ENCODE measurements at regions of chr6 and their contacts with region 1.

Region 1: DNA sequence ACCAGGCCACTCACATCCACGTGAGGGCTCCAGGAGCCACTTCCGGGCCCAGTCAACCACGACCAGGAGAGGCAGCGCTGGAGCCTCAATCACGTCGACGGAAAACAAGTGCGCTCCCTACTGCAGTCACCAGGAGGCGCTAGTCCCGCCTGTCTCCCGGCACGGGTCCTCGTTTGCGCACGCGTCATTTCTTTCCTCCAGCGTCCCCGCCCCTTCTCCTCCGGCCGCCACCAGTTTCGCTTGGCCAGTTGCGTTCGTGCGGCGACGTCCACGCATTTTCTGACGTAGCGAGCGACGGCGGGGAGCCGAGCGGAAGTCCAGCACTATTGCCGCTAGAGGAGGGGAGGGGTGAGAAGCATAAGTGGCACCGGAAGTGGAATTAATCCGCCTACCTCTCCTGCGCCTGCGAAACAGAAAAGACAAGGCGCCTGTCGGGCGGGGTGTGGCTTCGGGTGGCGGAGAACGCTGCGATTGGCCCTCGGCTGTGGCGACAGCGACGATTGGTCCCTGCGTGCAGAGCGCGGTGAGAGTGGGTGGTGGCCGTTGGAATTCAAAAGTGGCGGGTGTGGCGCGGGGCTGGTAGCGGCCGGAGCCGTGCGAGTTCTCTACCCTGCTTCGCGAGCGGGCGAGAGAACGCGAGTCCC is at the start of gene KIFC1:
- DNase-seq: peak; percentile 99 to 100
- ATAC-seq: peak; percentile 87 to 96 (median 88)
- H3K4me3 ChIP-seq: peak within 1 kb of the TSS; percentile 67
- H3K4me3 Mint-ChIP-seq: peak within 1 kb of the TSS; percentile 92
- H3K27ac ChIP-seq: peak within 1 kb of the TSS; percentile 85
- H3K27ac Mint-ChIP-seq: peak within 1 kb of the TSS; percentile 93
- H3K4me1 ChIP-seq: peaks cover 18% of the 10 kb centered on the region
- H3K4me1 Mint-ChIP-seq: peaks cover 25 to 29% of the 10 kb centered on the region in 2 donors
- H3K27me3 ChIP-seq: no peaks in the 10 kb centered on the region
- H3K27me3 Mint-ChIP-seq: no peaks in the 10 kb centered on the region
- CTCF ChIP-seq: peak; percentile 96
- total RNA-seq, gene KIFC1: 2.7 to 4.6 (median 3.3) TPM

Region 2: GRCh38 chr6:33144373-33144772 is 247.0 kb before region 1 on chr6:
- intact Hi-C with region 1: no loop called
- DNase-seq: no peak
- ATAC-seq: no peak
- H3K4me3 ChIP-seq: no peak overlapping the region
- H3K4me3 Mint-ChIP-seq: no peak overlapping the region
- H3K27ac ChIP-seq: no peak overlapping the region
- H3K27ac Mint-ChIP-seq: no peak overlapping the region
- H3K4me1 ChIP-seq: peaks cover 8% of the 10 kb centered on the region
- H3K4me1 Mint-ChIP-seq: peaks cover 18 to 24% of the 10 kb centered on the region in 2 donors
- H3K27me3 ChIP-seq: no peaks in the 10 kb centered on the region
- H3K27me3 Mint-ChIP-seq: peaks cover 17 to 18% of the 10 kb centered on the region in 2 donors
- CTCF ChIP-seq: no peak

Region 3: DNA sequence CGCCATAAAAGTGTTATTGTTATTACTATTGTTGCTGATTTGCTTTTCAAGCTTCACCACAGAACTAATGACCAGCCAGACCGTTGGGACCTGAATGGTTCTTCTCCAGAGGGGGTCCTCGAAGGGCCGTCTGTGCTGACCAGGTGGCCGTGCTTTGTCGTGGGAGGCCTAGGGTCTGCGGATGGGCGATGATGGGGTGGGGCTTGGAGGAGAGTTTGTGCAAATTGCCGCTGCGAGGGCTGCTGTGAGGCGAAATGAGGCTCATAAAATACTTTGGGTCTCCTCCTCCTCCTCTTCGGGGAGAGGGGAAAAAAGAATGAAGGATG is 67.8 kb before region 1 on chr6:
- intact Hi-C with region 1: loop called (anchors 1 kb)
- DNase-seq: no peak
- ATAC-seq: no peak
- H3K4me3 ChIP-seq: peak overlapping the region; percentile 67
- H3K4me3 Mint-ChIP-seq: peak overlapping the region; percentile 99
- H3K27ac ChIP-seq: peak overlapping the region; percentile 85
- H3K27ac Mint-ChIP-seq: peak overlapping the region; percentile 98
- H3K4me1 ChIP-seq: peaks cover 46% of the 10 kb centered on the region
- H3K4me1 Mint-ChIP-seq: peaks cover 50 to 57% of the 10 kb centered on the region in 2 donors
- H3K27me3 ChIP-seq: no peaks in the 10 kb centered on the region
- H3K27me3 Mint-ChIP-seq: no peaks in the 10 kb centered on the region
- CTCF ChIP-seq: no peak

Region 4: DNA sequence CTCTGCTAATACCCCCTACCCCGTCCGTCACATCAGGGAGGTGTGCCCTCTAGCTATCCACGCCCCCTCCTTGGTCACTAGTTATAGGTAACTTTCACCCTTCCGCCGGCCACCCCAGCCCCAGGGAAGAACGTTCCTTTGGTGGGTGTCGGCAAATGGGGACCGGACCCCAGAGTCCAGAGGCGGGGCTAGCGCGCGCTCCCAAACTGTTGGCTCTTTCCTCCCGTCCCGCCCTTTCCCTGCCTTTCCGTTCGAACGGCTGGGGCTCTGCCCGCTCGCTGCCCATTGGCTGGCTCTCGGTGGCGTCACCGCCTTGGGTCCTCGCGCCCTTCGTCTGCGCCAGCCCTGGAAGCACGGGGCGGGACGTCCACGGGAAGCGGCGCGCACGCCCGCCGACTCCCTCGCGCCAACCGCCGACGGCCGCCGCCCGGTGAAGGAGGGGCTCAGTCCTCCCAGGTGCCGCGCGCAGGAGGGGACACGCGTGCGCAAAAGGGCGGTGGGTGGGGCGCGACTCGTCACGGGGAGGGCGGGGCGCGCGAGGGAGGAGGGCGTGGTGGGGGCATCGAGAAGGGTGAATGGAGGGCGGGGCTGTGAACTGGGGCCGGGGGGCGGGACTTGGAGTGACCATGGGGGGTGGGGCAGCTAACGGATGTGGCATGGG is 18.8 kb after region 1 on chr6:
- intact Hi-C with region 1: loop called (anchors 1 kb)
- DNase-seq: peak; percentile 95 to 98
- ATAC-seq: peak; percentile 69 to 86 (median 74)
- H3K4me3 ChIP-seq: peak overlapping the region; percentile 84
- H3K4me3 Mint-ChIP-seq: peak overlapping the region; percentile 92
- H3K27ac ChIP-seq: peak overlapping the region; percentile 98
- H3K27ac Mint-ChIP-seq: peak overlapping the region; percentile 100
- H3K4me1 ChIP-seq: peaks cover 54% of the 10 kb centered on the region
- H3K4me1 Mint-ChIP-seq: peaks cover 38 to 48% of the 10 kb centered on the region in 2 donors
- H3K27me3 ChIP-seq: no peaks in the 10 kb centered on the region
- H3K27me3 Mint-ChIP-seq: no peaks in the 10 kb centered on the region
- CTCF ChIP-seq: no peak

Region 5: GRCh38 chr6:33425668-33426577 is 34.5 kb after region 1 on chr6:
- intact Hi-C with region 1: loop called (anchors 2 kb)
- DNase-seq: peak; percentile 69 to 89
- ATAC-seq: peak; percentile 50 to 76 (median 67)
- H3K4me3 ChIP-seq: peak overlapping the region; percentile 66
- H3K4me3 Mint-ChIP-seq: peak overlapping the region; percentile 90
- H3K27ac ChIP-seq: peak overlapping the region; percentile 89
- H3K27ac Mint-ChIP-seq: peak overlapping the region; percentile 88 to 92
- H3K4me1 ChIP-seq: peaks cover 59% of the 10 kb centered on the region
- H3K4me1 Mint-ChIP-seq: peaks cover 59 to 77% of the 10 kb centered on the region in 2 donors
- H3K27me3 ChIP-seq: no peaks in the 10 kb centered on the region
- H3K27me3 Mint-ChIP-seq: no peaks in the 10 kb centered on the region
- CTCF ChIP-seq: peak; percentile 42

Region 6: GRCh38 chr6:33547499-33547898 is 156.1 kb after region 1 on chr6:
- intact Hi-C with region 1: loop called (anchors 1 kb)
- DNase-seq: no peak
- ATAC-seq: no peak
- H3K4me3 ChIP-seq: no peak overlapping the region
- H3K4me3 Mint-ChIP-seq: no peak overlapping the region
- H3K27ac ChIP-seq: no peak overlapping the region
- H3K27ac Mint-ChIP-seq: peak overlapping the region in 1 of 2 donors; percentile 81
- H3K4me1 ChIP-seq: peaks cover 11% of the 10 kb centered on the region
- H3K4me1 Mint-ChIP-seq: peaks cover 12 to 15% of the 10 kb centered on the region in 2 donors
- H3K27me3 ChIP-seq: no peaks in the 10 kb centered on the region
- H3K27me3 Mint-ChIP-seq: no peaks in the 10 kb centered on the region
- CTCF ChIP-seq: no peak

Measured in natural killer cell (primary cell).